Testis (tissue), 5 donors: ENCODE measurements at regions of chr7 and their contacts with region 1.

Region 1: GRCh38 chr7:27196287-27196767 is 3.6 kb downstream of the HOXA13 start:
- DNase-seq: peak; percentile 92
- H3K4me3 ChIP-seq: no peak overlapping the region
- H3K27ac ChIP-seq: no peak overlapping the region
- H3K4me1 ChIP-seq: peaks cover 9% of the 10 kb centered on the region
- H3K27me3 ChIP-seq: no peaks in the 10 kb centered on the region
- CTCF ChIP-seq: peak; percentile 57 to 73 (median 67)
- POLR2A ChIP-seq: no peak

Region 2: GRCh38 chr7:27329911-27330310 is 133.6 kb after region 1 on chr7:
- intact Hi-C with region 1: no loop called
- DNase-seq: no peak
- H3K4me3 ChIP-seq: no peak overlapping the region
- H3K27ac ChIP-seq: no peak overlapping the region
- H3K4me1 ChIP-seq: no peaks in the 10 kb centered on the region
- H3K27me3 ChIP-seq: no peaks in the 10 kb centered on the region
- CTCF ChIP-seq: peak in 1 of 3 experiments; percentile 11
- POLR2A ChIP-seq: no peak

Region 3: GRCh38 chr7:27933671-27934565 is 737.6 kb after region 1 on chr7:
- intact Hi-C with region 1: loop called (anchors 10 kb)
- DNase-seq: no peak
- H3K4me3 ChIP-seq: no peak overlapping the region
- H3K27ac ChIP-seq: no peak overlapping the region
- H3K4me1 ChIP-seq: no peaks in the 10 kb centered on the region
- H3K27me3 ChIP-seq: no peaks in the 10 kb centered on the region
- CTCF ChIP-seq: no peak
- POLR2A ChIP-seq: no peak

Region 4: GRCh38 chr7:28083164-28083997 is 887.1 kb after region 1 on chr7:
- intact Hi-C with region 1: loop called (anchors 10 kb)
- DNase-seq: peak; percentile 80
- H3K4me3 ChIP-seq: no peak overlapping the region
- H3K27ac ChIP-seq: peak overlapping the region; percentile 56 to 70
- H3K4me1 ChIP-seq: peaks cover 52% of the 10 kb centered on the region
- H3K27me3 ChIP-seq: no peaks in the 10 kb centered on the region
- CTCF ChIP-seq: no peak
- POLR2A ChIP-seq: no peak